ENCODE measurements at regions of chr12 and their contacts with region 1.

Region 1: DNA sequence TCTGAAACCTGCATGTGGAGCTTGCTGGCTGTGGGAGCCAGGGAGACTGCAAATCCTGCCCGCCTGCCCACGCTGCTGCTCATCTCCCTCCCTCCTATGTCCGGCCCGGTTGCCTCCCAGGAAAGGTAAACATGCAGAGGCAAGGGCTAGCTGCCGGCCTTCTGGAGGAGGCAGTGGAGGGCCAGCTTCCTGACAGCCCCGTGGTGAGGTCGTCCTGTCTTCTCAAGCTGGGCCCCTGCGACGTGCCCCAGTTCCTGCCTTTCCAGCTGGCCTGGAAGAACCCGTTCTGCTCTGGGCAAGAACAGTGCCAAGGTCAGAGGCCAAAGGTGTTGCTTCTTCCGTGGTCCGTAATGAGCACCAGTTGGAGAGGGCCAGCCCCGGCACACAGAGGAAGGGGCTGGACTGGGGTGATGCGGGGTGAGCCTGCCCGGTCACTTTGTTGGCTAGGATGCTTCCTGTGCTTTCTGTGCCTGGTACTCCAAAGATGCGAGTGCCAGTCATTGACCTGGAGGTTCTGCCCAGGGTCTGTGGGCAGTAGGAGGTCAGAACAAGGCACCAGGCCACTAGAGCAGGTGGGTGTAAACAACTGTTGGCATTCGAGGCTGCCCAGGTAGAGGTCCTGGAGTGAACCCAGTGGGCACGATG is 25.3 kb downstream of the TPCN1 start:
- DNase-seq: no peak
- H3K4me3 ChIP-seq: no peak overlapping the region
- H3K27ac ChIP-seq: peak overlapping the region; percentile 91
- H3K4me1 ChIP-seq: peaks cover 38% of the 10 kb centered on the region
- H3K27me3 ChIP-seq: no peaks in the 10 kb centered on the region
- CTCF ChIP-seq: no peak

Region 2: DNA sequence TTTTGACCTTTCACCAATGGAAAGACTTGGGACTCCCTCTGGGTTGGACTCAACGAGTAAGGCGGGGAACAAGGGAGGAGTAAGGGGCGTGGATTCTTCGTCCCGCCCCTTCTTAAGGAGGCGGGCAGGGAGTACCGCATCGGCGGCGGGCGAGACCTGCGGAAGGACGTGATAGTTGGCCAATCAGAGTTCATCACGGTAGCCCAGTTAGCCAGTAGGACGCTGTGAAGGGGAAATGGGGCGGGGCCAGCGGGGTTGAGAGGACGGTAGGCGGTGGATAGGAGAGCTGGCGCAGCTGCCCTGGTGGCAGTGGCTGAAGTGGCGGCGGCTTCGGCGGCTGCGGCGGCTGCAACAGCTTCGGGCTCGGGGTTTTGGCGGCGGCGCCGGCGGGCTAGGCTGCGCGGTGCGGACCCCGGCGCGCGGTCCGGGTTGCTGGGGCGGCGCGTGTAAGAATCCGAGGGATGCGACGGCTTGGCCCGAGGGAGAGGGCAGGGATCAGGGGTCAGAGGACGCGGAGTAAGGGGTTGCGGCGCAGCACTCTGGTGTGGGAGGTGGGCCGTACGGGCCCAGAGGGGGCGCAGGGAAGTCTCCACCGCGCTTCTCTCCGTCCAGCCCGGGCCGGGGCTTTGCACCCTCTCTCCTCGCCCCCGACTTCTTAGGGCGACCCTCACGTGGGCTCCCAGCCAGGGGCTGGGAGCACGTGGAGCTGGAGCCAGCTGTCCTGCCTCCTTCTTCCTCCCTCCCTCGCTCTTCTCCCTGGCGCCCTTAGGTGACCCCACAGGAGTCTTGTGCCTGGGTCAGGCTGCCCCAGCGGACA is 25.2 kb before region 1 on chr12 and contains the start of gene TPCN1:
- CTCF ChIA-PET with region 1: no interaction called
- POLR2A ChIA-PET with region 1: interaction called, 13 read pairs
- intact Hi-C with region 1: no loop called
- DNase-seq: peak; percentile 100
- H3K4me3 ChIP-seq: peak within 1 kb of the TSS; percentile 79
- H3K27ac ChIP-seq: peak within 1 kb of the TSS; percentile 76
- H3K4me1 ChIP-seq: peaks cover 15% of the 10 kb centered on the region
- H3K27me3 ChIP-seq: no peaks in the 10 kb centered on the region
- CTCF ChIP-seq: no peak
- total RNA-seq, gene TPCN1: 18.8 and 25.8 TPM in 2 replicates